ENCODE measurements at regions of chr2 and their contacts with region 1.

Region 1: GRCh38 chr2:24084386-24085361 is at the start of gene TP53I3:
- DNase-seq: peak; percentile 96
- H3K4me3 Mint-ChIP-seq: peak within 1 kb of the TSS; percentile 88
- H3K27ac Mint-ChIP-seq: peak within 1 kb of the TSS; percentile 73
- H3K4me1 Mint-ChIP-seq: peaks cover 17% of the 10 kb centered on the region
- H3K27me3 Mint-ChIP-seq: no peaks in the 10 kb centered on the region
- total RNA-seq, gene TP53I3: 1.2 and 2.0 TPM in 2 replicates

Region 2: GRCh38 chr2:23824777-23825212 is 259.9 kb before region 1 on chr2:
- intact Hi-C with region 1: loop called (anchors 1 kb)
- DNase-seq: peak; percentile 83
- H3K4me3 Mint-ChIP-seq: no peak overlapping the region
- H3K27ac Mint-ChIP-seq: no peak overlapping the region
- H3K4me1 Mint-ChIP-seq: peaks cover 2% of the 10 kb centered on the region
- H3K27me3 Mint-ChIP-seq: no peaks in the 10 kb centered on the region

Region 3: GRCh38 chr2:23926750-23927571 is 157.7 kb before region 1 on chr2 and contains the start of gene ATAD2B:
- intact Hi-C with region 1: loop called (anchors 1 kb)
- DNase-seq: peak; percentile 99
- H3K4me3 Mint-ChIP-seq: peak within 1 kb of the TSS; percentile 91
- H3K27ac Mint-ChIP-seq: peak within 1 kb of the TSS; percentile 100
- H3K4me1 Mint-ChIP-seq: peaks cover 28% of the 10 kb centered on the region
- H3K27me3 Mint-ChIP-seq: peaks cover 2% of the 10 kb centered on the region
- total RNA-seq, gene ATAD2B: 23.9 and 24.3 TPM in 2 replicates

Region 4: GRCh38 chr2:23939987-23940717 is 144.5 kb before region 1 on chr2 and contains the start of gene UBXN2A:
- intact Hi-C with region 1: loop called (anchors 2 kb)
- DNase-seq: peak; percentile 95
- H3K4me3 Mint-ChIP-seq: peak within 1 kb of the TSS; percentile 89
- H3K27ac Mint-ChIP-seq: peak within 1 kb of the TSS; percentile 88
- H3K4me1 Mint-ChIP-seq: peaks cover 20% of the 10 kb centered on the region
- H3K27me3 Mint-ChIP-seq: peaks cover 14% of the 10 kb centered on the region
- total RNA-seq, gene UBXN2A: 11.5 and 13.1 TPM in 2 replicates

Region 5: GRCh38 chr2:23988371-23988770 is 96.3 kb before region 1 on chr2:
- intact Hi-C with region 1: loop called (anchors 1 kb)
- DNase-seq: no peak
- H3K4me3 Mint-ChIP-seq: no peak overlapping the region
- H3K27ac Mint-ChIP-seq: no peak overlapping the region
- H3K4me1 Mint-ChIP-seq: no peaks in the 10 kb centered on the region
- H3K27me3 Mint-ChIP-seq: no peaks in the 10 kb centered on the region

Region 6: GRCh38 chr2:24105816-24106215 is 21.1 kb after region 1 on chr2:
- intact Hi-C with region 1: no loop called
- DNase-seq: no peak
- H3K4me3 Mint-ChIP-seq: no peak overlapping the region
- H3K27ac Mint-ChIP-seq: no peak overlapping the region
- H3K4me1 Mint-ChIP-seq: no peaks in the 10 kb centered on the region
- H3K27me3 Mint-ChIP-seq: peaks cover 6% of the 10 kb centered on the region

Region 7: DNA sequence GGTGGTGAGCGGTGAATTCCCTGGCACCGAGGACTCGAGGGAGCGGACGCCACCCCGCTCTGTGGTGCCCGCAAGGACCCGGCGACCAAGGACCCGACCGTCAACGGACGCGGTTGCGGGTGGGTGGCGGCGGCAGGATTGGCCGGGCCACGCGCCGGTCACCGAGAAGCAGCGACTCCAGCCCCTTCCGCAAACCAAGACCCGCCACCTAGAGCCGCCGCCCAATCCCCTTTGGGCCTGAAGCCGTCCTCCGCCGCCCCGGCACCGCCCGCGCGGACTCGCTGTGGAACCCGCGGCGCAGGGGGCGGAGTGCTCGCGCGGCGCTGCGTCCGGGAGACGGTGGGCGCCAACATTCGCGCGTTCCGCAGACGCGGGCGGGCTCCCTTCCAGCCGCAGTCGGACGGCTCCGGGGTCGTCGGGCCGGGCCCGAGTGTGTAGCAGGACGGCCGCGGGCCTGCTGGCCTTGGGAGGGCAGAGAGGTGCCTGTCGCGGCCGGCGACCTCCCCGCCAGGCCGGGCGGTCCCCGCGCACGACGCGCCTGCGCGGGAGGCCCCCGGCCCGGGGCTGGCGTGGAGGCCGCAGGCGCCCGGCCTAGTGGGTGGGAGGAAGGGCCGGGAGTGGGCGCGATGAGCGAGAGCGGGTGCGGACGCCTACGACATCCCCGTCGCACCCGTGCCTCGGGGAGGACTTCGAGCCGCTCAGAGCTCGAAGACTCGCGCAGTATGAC is 38.7 kb after region 1 on chr2 and contains the starts of genes FAM228B and PFN4:
- intact Hi-C with region 1: loop called (anchors 1 kb)
- DNase-seq: peak; percentile 91
- H3K4me3 Mint-ChIP-seq: peak within 1 kb of the TSS; percentile 81
- H3K27ac Mint-ChIP-seq: peak within 1 kb of the TSS; percentile 75
- H3K4me1 Mint-ChIP-seq: peaks cover 13% of the 10 kb centered on the region
- H3K27me3 Mint-ChIP-seq: peaks cover 2% of the 10 kb centered on the region
- total RNA-seq, gene FAM228B: 3.2 and 4.7 TPM in 2 replicates
- total RNA-seq, gene PFN4: 0.47 TPM in 1 of 2 replicates, not detected in the other

Region 8: DNA sequence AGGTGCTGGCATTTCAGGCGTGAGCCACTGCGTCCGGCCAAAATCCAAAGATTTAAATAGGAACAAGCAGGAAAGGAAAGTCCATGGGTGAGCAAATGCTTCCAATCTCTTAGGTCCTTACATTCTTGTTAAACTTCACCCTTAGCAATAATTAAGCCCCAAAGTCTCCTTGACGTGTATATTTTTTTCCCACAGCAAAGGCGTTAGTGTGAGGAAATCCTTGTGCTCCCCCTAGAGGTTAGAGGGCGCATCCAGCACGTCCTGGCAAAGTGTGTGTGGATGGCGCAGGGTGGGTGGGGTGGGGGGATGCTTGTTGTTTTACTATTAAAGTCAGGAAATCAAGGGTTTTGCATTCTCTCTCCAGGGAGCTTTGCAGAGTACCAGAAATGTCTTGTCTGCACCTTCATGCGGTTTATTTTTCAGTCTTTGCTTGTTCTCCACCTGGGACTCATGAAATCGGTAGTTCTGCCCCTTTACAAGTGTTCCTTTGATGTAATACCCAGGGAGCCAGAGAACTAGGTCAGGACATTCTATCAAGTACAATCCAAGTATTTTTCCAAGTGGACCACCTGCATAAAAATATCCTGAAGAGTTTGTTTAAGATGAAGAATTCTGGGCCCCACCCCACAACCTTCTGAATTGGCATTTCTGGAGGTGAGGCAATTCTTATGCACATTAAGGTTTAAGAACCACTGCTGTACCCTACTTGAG is 297.8 kb after region 1 on chr2:
- intact Hi-C with region 1: loop called (anchors 2 kb)
- DNase-seq: peak; percentile 86
- H3K4me3 Mint-ChIP-seq: no peak overlapping the region
- H3K27ac Mint-ChIP-seq: no peak overlapping the region
- H3K4me1 Mint-ChIP-seq: peaks cover 1% of the 10 kb centered on the region
- H3K27me3 Mint-ChIP-seq: peaks cover 4% of the 10 kb centered on the region

Measured in activated CD4-positive, alpha-beta T cell treated with anti-CD3 and anti-CD28 coated beads, Interleukin-2, amount 10 ng/mL, durations not matched to agents 24 days and 14 days (primary cell).